ENCODE measurements at regions of chr4 and their contacts with region 1.

Region 1: DNA sequence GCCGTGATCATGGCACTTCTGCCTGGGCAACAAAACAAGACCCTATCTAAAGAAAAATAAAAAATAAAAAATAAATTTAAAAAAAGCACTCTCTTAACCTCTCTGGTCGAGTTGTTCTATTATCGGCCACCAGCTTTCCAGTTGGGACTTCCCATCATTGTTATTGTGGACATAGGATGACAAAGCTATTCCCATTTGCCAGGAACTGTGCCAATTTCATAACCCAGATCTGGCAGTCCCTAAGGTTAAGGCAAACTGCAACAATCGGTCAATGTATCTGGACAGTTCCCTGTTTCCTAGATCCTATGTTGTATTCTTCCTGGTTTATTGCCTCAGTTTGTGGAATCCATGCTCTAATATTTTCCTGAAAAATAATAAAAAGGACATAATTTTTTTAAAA is 17.8 kb upstream of the ANXA5 start:
- DNase-seq: no peak
- ATAC-seq: no peak
- H3K4me3 Mint-ChIP-seq: no peak overlapping the region
- H3K27ac Mint-ChIP-seq: no peak overlapping the region
- H3K4me1 Mint-ChIP-seq: peaks cover 18% of the 10 kb centered on the region
- H3K27me3 Mint-ChIP-seq: peaks cover 54% of the 10 kb centered on the region

Region 2: GRCh38 chr4:121724706-121725105 is 10.2 kb after region 1 on chr4:
- CTCF ChIA-PET with region 1: interaction called, 14 read pairs
- DNase-seq: no peak
- ATAC-seq: no peak
- H3K4me3 Mint-ChIP-seq: no peak overlapping the region
- H3K27ac Mint-ChIP-seq: no peak overlapping the region
- H3K4me1 Mint-ChIP-seq: peaks cover 12% of the 10 kb centered on the region
- H3K27me3 Mint-ChIP-seq: peaks cover 7% of the 10 kb centered on the region

Measured in activated CD8-positive, alpha-beta memory T cell treated with anti-CD3 and anti-CD28 coated beads, Interleukin-2, amount 10 ng/mL, durations not matched to agents 7 days and 5 days (primary cell).